PC-3 (cell line): ENCODE measurements at regions of chr14 and their contacts with region 1.

Region 1: GRCh38 chr14:97106207-97107008 is 309.2 kb downstream of the VRK1 start:
- DNase-seq: peak; percentile 91
- ATAC-seq: peak; percentile 69
- H3K4me3 ChIP-seq: no peak overlapping the region
- H3K27ac ChIP-seq: peak overlapping the region; percentile 100
- H3K4me1 ChIP-seq: peaks cover 35% of the 10 kb centered on the region
- H3K27me3 ChIP-seq: no peaks in the 10 kb centered on the region
- CTCF ChIP-seq: no peak

Region 2: DNA sequence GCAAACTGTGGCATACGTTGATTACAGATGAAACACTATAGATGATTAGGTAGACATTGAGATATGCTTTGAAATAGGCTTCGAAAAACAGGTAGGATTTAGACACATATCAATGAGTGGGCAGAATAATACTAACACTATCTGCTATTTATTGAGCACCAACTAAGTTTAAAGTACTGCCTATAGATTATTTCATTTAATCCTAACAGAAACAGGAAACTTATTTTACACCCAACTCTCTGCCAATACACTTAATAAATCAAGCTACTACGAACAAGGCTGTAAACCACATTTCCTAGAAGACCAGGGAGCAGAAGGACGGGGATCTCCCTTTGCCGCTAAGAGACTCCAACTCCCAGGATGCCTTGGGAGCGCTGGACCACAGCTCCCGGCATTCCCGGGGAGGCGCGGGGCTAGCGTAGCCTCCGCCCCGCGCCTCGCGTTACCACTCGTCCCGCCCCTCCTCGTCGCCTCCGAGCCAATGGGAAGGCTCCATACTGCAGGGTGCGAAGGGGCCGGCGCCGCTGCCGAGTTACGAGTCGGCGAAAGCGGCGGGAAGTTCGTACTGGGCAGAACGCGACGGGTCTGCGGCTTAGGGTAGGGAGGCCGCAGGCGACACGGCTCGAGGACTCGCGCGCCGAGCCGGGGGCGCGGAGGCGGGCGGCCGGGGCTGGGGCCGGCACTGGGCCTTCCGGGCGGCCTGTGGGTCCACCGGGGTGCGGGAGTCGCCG is 309.4 kb before region 1 on chr14 and contains the start of gene VRK1:
- CTCF ChIA-PET with region 1: no interaction called
- POLR2A ChIA-PET with region 1: no interaction called
- intact Hi-C with region 1: loop called (anchors 2 kb)
- DNase-seq: peak; percentile 97
- ATAC-seq: peak; percentile 98
- H3K4me3 ChIP-seq: peak within 1 kb of the TSS; percentile 90
- H3K27ac ChIP-seq: peak within 1 kb of the TSS; percentile 34; the same call in 1 of the 2 replicates
- H3K4me1 ChIP-seq: peaks cover 24% of the 10 kb centered on the region
- H3K27me3 ChIP-seq: no peaks in the 10 kb centered on the region
- CTCF ChIP-seq: no peak
- total RNA-seq, gene VRK1: 39.1 and 46.7 TPM in 2 replicates

Region 3: DNA sequence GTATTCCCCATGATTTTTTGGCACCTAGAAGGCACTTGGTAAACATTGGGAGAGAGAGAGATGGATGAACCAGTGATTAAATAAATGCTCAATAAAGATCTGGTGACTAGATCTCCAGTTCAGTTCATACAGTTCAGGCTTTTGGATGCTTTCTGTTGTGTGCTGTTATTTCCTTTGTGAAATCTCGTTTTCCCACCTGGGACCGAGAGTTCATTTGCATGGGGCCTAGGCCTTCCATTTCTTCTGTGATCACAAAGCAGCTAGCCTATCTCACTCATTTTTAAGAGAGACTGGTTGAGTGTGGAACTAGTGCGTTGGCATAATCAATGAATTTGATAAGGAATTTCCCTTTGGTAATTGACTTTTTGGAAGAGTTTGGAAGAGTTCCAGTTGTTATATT is 205.2 kb before region 1 on chr14:
- CTCF ChIA-PET with region 1: no interaction called
- POLR2A ChIA-PET with region 1: no interaction called
- intact Hi-C with region 1: loop called (anchors 1 kb)
- DNase-seq: no peak
- ATAC-seq: no peak
- H3K4me3 ChIP-seq: no peak overlapping the region
- H3K27ac ChIP-seq: no peak overlapping the region
- H3K4me1 ChIP-seq: peaks cover 28% of the 10 kb centered on the region
- H3K27me3 ChIP-seq: no peaks in the 10 kb centered on the region
- CTCF ChIP-seq: no peak

Region 4: GRCh38 chr14:97164021-97164420 is 57.6 kb after region 1 on chr14:
- CTCF ChIA-PET with region 1: no interaction called
- POLR2A ChIA-PET with region 1: no interaction called
- intact Hi-C with region 1: loop called (anchors 1 kb)
- DNase-seq: peak; percentile 50
- ATAC-seq: peak; percentile 55
- H3K4me3 ChIP-seq: peak overlapping the region; percentile 52
- H3K27ac ChIP-seq: peak overlapping the region; percentile 63
- H3K4me1 ChIP-seq: peaks cover 19% of the 10 kb centered on the region
- H3K27me3 ChIP-seq: no peaks in the 10 kb centered on the region
- CTCF ChIP-seq: peak; percentile 53

Region 5: DNA sequence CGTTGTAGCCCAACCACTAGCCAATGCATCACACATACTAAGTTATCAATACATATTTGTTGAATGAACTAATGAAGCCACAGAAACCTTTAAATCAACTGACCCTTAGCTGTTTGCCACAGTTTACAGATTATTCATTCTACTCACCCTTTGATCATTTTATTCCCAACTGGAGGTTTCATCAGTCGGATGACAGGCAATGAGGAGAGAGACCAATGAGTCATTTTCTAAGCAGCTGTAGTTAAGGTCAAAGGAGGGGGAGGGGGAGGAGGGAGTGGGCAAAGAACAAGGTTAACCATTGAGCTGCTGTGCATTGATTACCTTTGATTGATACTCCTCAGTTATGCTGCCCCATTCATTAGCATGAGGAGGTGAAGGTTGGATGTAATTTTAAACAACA is 160.2 kb after region 1 on chr14:
- CTCF ChIA-PET with region 1: no interaction called
- POLR2A ChIA-PET with region 1: no interaction called
- intact Hi-C with region 1: loop called (anchors 2 kb)
- DNase-seq: peak; percentile 92
- ATAC-seq: peak; percentile 26
- H3K4me3 ChIP-seq: no peak overlapping the region
- H3K27ac ChIP-seq: peak overlapping the region; percentile 87
- H3K4me1 ChIP-seq: peaks cover 49% of the 10 kb centered on the region
- H3K27me3 ChIP-seq: no peaks in the 10 kb centered on the region
- CTCF ChIP-seq: no peak

Region 6: GRCh38 chr14:97571866-97572555 is 465.6 kb after region 1 on chr14:
- CTCF ChIA-PET with region 1: no interaction called
- POLR2A ChIA-PET with region 1: no interaction called
- intact Hi-C with region 1: no loop called
- DNase-seq: no peak
- ATAC-seq: no peak
- H3K4me3 ChIP-seq: no peak overlapping the region
- H3K27ac ChIP-seq: no peak overlapping the region
- H3K4me1 ChIP-seq: no peaks in the 10 kb centered on the region
- H3K27me3 ChIP-seq: peaks cover 31% of the 10 kb centered on the region
- CTCF ChIP-seq: no peak